K562 (cell line): ENCODE measurements at regions of chr7 and their contacts with region 1.

Region 1: GRCh38 chr7:139431010-139431409 is 52.5 kb downstream of the KLRG2 start:
- DNase-seq: no peak
- ATAC-seq: no peak
- H3K4me3 ChIP-seq: no peak overlapping the region
- H3K27ac ChIP-seq: no peak overlapping the region
- H3K4me1 ChIP-seq: peaks cover 4 to 5% of the 10 kb centered on the region in 2 experiments; a peak in 3 of 5 replicates
- H3K27me3 ChIP-seq: no peaks in the 10 kb centered on the region
- CTCF ChIP-seq: no peak
- EP300 ChIP-seq: no peak
- POLR2A ChIP-seq: no peak
- RAD21 ChIP-seq: no peak

Region 2: GRCh38 chr7:139321071-139321745 is 109.8 kb before region 1 on chr7:
- CTCF ChIA-PET with region 1: interaction called, 3 read pairs
- POLR2A ChIA-PET with region 1: no interaction called
- in situ Hi-C with region 1: no loop called
- intact Hi-C with region 1: loop called (anchors 5 kb)
- DNase-seq: peak; percentile 40 to 54 (median 46)
- ATAC-seq: peak; percentile 86
- H3K4me3 ChIP-seq: no peak overlapping the region
- H3K27ac ChIP-seq: no peak overlapping the region
- H3K4me1 ChIP-seq: peaks cover 0 to 6% of the 10 kb centered on the region in 2 experiments; a peak in 4 of 5 replicates
- H3K27me3 ChIP-seq: no peaks in the 10 kb centered on the region; a peak in 1 of 5 replicates
- CTCF ChIP-seq: peak; percentile 70 to 84 (median 77)
- EP300 ChIP-seq: no peak
- POLR2A ChIP-seq: no peak
- RAD21 ChIP-seq: peak; percentile 68 to 74

Region 3: GRCh38 chr7:139557857-139558581 is 127.0 kb after region 1 on chr7:
- CTCF ChIA-PET with region 1: no interaction called
- POLR2A ChIA-PET with region 1: interaction called, 3 read pairs
- in situ Hi-C with region 1: no loop called
- intact Hi-C with region 1: loop called (anchors 10 kb)
- DNase-seq: peak in 1 of 4 experiments; percentile 37
- ATAC-seq: peak; percentile 66
- H3K4me3 ChIP-seq: no peak overlapping the region
- H3K27ac ChIP-seq: no peak overlapping the region
- H3K4me1 ChIP-seq: peaks cover 0 to 7% of the 10 kb centered on the region in 2 experiments; a peak in 2 of 5 replicates
- H3K27me3 ChIP-seq: peaks cover 19 to 25% of the 10 kb centered on the region in 2 experiments; a peak in 4 of 5 replicates
- CTCF ChIP-seq: peak; percentile 59 to 77 (median 60)
- EP300 ChIP-seq: no peak
- POLR2A ChIP-seq: no peak
- RAD21 ChIP-seq: peak in 1 of 2 experiments; percentile 49; a peak in 2 of 4 replicates

Region 4: DNA sequence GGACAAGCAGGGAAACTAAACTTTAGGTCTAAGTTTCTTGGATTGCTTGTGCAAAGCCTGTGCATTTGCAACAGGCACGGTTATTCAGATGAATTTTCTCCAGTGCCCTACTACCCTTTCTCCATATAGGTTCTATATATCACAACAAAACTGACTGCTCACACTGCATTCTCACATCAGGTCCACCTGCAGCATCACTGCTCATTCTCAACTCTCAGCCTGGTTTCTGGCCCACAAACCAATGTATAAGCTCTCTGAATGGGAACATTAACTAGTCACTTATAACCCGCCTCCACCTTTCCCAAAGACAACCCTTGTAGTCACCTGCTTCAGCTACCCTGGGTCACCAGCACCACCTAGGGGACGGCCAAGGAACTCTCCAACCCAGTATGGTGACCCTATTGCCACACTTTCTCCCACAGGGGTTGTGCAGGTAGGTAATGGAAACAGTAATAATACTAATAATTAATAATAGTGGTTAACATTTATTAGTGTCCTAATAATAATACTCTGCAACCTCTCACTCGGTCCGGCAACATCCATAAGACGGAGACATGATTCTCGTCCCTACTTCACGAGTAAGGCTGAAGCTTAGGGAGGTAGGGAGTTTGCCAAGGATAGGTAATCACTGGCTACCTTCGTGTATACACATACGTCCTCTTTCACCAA is 189.8 kb after region 1 on chr7:
- CTCF ChIA-PET with region 1: interaction called, 4 read pairs
- POLR2A ChIA-PET with region 1: interaction called, 4 read pairs
- in situ Hi-C with region 1: no loop called
- intact Hi-C with region 1: loop called (anchors 5 kb)
- DNase-seq: peak; percentile 75 to 91 (median 83)
- ATAC-seq: peak; percentile 94
- H3K4me3 ChIP-seq: no peak overlapping the region
- H3K27ac ChIP-seq: no peak overlapping the region
- H3K4me1 ChIP-seq: peaks cover 0 to 6% of the 10 kb centered on the region in 2 experiments; a peak in 2 of 5 replicates
- H3K27me3 ChIP-seq: no peaks in the 10 kb centered on the region
- CTCF ChIP-seq: peak; percentile 91 to 97 (median 95)
- EP300 ChIP-seq: 0 out of 2 replicates have a peak, but pooled peaks have one; percentile 7
- POLR2A ChIP-seq: no peak
- RAD21 ChIP-seq: peak; percentile 80 to 84

Region 5: GRCh38 chr7:139714163-139714901 is 283.3 kb after region 1 on chr7:
- CTCF ChIA-PET with region 1: no interaction called
- POLR2A ChIA-PET with region 1: no interaction called
- in situ Hi-C with region 1: no loop called
- intact Hi-C with region 1: no loop called
- DNase-seq: no peak
- ATAC-seq: no peak
- H3K4me3 ChIP-seq: no peak overlapping the region
- H3K27ac ChIP-seq: no peak overlapping the region
- H3K4me1 ChIP-seq: no peaks in the 10 kb centered on the region
- H3K27me3 ChIP-seq: no peaks in the 10 kb centered on the region; a peak in 1 of 5 replicates
- CTCF ChIP-seq: no peak
- EP300 ChIP-seq: no peak
- POLR2A ChIP-seq: no peak
- RAD21 ChIP-seq: no peak